ENCODE measurements at regions of chr14 and their contacts with region 1.

Region 1: DNA sequence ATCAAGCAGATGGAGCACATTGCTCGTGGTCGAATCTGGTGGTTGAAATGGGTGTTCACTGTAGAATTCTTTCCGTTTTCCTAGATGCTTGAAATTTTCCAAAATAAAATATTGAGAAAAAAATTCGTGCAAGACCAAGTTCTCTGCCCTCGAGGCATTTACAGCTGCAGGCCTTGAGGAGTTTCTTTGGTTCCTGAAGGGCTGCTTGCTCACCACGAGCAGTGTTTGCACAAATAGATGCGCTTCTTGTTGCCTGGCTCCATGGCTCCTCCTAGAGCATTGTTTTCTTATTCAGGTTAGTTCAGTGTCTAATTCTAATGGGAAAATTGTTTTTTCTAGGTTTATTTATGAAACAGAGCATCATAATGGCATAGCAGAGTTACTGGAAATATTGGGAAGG is 74.5 kb upstream of the DYNC1H1 start:
- DNase-seq: peak in 2 of 9 experiments; percentile 24 to 37
- ATAC-seq: peak; percentile 44
- H3K4me3 ChIP-seq: no peak overlapping the region
- H3K4me3 Mint-ChIP-seq: no peak overlapping the region
- H3K27ac ChIP-seq: no peak overlapping the region
- H3K27ac Mint-ChIP-seq: peak overlapping the region; percentile 62
- H3K4me1 ChIP-seq: no peaks in the 10 kb centered on the region
- H3K4me1 Mint-ChIP-seq: no peaks in the 10 kb centered on the region
- H3K27me3 ChIP-seq: no peaks in the 10 kb centered on the region
- H3K27me3 Mint-ChIP-seq: no peaks in the 10 kb centered on the region
- CTCF ChIP-seq: no peak

Region 2: DNA sequence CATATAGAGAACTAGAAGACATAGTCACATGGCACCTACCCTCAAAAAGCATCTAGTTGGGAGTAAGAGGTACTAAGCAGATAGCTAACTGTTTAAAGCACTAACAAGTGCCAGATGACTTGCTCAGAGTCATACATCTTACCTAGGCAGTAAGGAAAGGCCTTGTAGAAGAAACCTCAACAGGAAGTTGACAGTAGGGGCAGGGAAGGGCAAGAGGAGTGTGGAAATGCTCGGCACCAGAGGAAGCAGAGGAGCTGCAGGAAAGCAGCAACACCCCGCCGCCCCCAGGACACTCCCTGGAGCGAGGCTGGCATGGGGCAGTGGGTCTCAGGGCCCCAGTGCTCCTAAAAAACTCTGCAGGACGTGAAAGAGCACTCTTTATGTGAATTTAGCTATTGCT is 35.5 kb before region 1 on chr14:
- CTCF ChIA-PET with region 1: no interaction called
- POLR2A ChIA-PET with region 1: no interaction called
- intact Hi-C with region 1: loop called in 1 of 2 experiments (anchors 5 kb)
- DNase-seq: peak in 2 of 9 experiments; percentile 37 to 61
- ATAC-seq: peak; percentile 72
- H3K4me3 ChIP-seq: no peak overlapping the region
- H3K4me3 Mint-ChIP-seq: peak overlapping the region; percentile 48
- H3K27ac ChIP-seq: peak overlapping the region in 1 of 2 experiments; percentile 58
- H3K27ac Mint-ChIP-seq: peak overlapping the region; percentile 84
- H3K4me1 ChIP-seq: peaks cover 71% of the 10 kb centered on the region
- H3K4me1 Mint-ChIP-seq: peaks cover 90% of the 10 kb centered on the region
- H3K27me3 ChIP-seq: no peaks in the 10 kb centered on the region
- H3K27me3 Mint-ChIP-seq: no peaks in the 10 kb centered on the region
- CTCF ChIP-seq: no peak

Region 3: DNA sequence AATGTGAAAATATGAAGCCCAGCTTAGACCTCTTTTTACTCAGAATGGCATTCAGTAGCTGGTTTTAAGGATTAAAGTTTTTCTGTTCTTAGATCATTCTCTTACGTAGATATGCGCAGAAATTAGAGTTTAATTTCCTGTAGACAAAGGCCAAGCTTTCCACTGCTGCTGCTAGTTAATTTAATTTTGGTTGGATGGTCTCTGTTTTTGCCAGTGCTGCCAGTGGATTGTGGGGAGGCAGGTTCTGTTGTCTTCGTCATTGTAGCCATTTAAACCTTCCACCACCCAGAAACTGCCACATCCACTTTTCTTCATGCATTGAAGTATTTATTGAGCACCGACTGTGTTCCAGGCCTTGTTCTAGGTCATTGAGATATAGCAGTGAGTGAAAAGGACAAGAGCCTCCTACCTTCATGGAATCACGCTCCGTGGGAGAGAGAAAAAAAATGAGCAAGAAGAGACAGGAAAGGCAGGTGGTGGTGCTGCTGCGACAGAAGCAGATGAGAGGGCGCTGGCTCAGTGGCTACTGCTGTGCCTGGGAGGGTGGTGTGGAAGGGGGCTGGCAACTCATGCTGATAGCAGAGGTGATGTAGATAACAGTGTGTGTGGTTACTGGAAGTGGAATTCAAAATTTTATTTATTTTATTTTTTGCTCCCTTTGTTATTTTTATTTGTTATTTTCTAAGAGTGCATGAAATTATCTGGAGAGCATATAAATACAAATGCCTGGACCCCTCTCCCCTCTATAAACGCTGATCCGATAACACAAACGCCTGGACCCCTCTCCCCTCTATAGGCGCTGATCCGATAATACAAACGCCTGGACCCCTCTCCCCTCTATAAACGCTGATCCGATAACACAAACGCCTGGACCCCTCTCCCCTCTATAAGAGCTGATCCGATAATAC is 107.8 kb after region 1 on chr14:
- CTCF ChIA-PET with region 1: no interaction called
- POLR2A ChIA-PET with region 1: no interaction called
- intact Hi-C with region 1: no loop called
- DNase-seq: no peak
- ATAC-seq: no peak
- H3K4me3 ChIP-seq: no peak overlapping the region
- H3K4me3 Mint-ChIP-seq: no peak overlapping the region
- H3K27ac ChIP-seq: no peak overlapping the region
- H3K27ac Mint-ChIP-seq: no peak overlapping the region
- H3K4me1 ChIP-seq: no peaks in the 10 kb centered on the region
- H3K4me1 Mint-ChIP-seq: peaks cover 2% of the 10 kb centered on the region
- H3K27me3 ChIP-seq: no peaks in the 10 kb centered on the region
- H3K27me3 Mint-ChIP-seq: no peaks in the 10 kb centered on the region
- CTCF ChIP-seq: no peak